Cardiac septum (tissue), 1 donor: ENCODE measurements at regions of chr22 and their contacts with region 1.

Region 1: GRCh38 chr22:42717197-42717928 is 3.3 kb downstream of the A4GALT start:
- DNase-seq: no peak

Region 2: GRCh38 chr22:42688241-42689211 is 28.8 kb before region 1 on chr22:
- intact Hi-C with region 1: loop called (anchors 2 kb)
- DNase-seq: peak; percentile 92

Region 3: DNA sequence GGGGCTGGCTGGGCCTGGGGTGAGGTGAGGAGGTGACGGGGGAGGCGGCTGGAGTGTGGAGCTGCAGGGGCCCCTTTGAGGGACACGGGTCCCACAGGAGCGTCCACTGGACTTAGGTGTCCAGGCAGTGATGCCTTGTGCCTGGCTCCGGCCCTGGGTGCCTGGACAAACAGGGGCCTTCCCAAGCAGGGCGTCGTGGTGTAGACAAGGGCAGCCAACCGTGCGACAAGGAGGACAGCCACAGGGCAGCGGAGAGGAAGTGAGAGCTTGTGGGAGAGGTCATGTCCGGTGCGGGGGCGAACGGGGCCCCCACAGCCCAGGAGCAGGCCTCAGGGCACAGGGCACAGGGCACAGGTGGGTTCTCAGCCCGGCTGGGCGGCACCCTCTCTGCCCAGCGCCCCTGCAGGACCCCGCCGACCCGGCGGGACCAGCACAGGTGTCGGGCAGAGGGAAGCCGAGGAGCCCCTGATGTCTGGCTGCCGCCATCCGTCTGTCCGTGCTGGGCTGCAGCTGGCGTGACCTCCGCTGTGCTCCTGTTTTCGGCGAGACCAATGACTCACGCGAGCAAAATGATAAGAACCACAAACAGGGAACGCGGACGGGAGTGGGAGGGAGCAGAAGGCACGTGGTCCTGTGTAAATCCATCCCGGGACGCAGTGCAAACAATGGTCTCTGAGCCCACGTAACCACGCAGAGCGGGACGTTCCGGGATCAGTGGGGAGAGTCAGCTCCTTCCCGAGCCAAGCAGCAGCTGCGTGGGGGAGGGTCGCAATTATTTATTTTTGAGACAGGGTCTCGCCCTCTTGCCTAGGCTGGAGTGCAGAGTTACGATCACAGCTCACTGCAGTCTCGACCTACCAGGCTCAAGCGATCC is 52.4 kb after region 1 on chr22:
- intact Hi-C with region 1: loop called (anchors 5 kb)
- DNase-seq: no peak